Activated CD8-positive, alpha-beta T cell treated with anti-CD3 and anti-CD28 coated beads for 36 hours (primary cell): ENCODE measurements at regions of chr19 and their contacts with region 1.

Region 1: GRCh38 chr19:2084993-2085720 is 11.0 kb downstream of the MOB3A start:
- DNase-seq: peak; percentile 98
- ATAC-seq: peak; percentile 60
- H3K4me3 Mint-ChIP-seq: peak overlapping the region; percentile 99
- H3K27ac Mint-ChIP-seq: peak overlapping the region; percentile 100
- H3K4me1 Mint-ChIP-seq: peaks cover 56% of the 10 kb centered on the region
- H3K27me3 Mint-ChIP-seq: no peaks in the 10 kb centered on the region
- CTCF ChIP-seq: no peak

Region 2: GRCh38 chr19:2021453-2022140 is 63.6 kb before region 1 on chr19:
- CTCF ChIA-PET with region 1: no interaction called
- POLR2A ChIA-PET with region 1: interaction called, 3 read pairs
- intact Hi-C with region 1: loop called (anchors 5 kb)
- DNase-seq: no peak
- ATAC-seq: no peak
- H3K4me3 Mint-ChIP-seq: no peak overlapping the region
- H3K27ac Mint-ChIP-seq: no peak overlapping the region
- H3K4me1 Mint-ChIP-seq: peaks cover 4% of the 10 kb centered on the region
- H3K27me3 Mint-ChIP-seq: no peaks in the 10 kb centered on the region
- CTCF ChIP-seq: no peak

Region 3: DNA sequence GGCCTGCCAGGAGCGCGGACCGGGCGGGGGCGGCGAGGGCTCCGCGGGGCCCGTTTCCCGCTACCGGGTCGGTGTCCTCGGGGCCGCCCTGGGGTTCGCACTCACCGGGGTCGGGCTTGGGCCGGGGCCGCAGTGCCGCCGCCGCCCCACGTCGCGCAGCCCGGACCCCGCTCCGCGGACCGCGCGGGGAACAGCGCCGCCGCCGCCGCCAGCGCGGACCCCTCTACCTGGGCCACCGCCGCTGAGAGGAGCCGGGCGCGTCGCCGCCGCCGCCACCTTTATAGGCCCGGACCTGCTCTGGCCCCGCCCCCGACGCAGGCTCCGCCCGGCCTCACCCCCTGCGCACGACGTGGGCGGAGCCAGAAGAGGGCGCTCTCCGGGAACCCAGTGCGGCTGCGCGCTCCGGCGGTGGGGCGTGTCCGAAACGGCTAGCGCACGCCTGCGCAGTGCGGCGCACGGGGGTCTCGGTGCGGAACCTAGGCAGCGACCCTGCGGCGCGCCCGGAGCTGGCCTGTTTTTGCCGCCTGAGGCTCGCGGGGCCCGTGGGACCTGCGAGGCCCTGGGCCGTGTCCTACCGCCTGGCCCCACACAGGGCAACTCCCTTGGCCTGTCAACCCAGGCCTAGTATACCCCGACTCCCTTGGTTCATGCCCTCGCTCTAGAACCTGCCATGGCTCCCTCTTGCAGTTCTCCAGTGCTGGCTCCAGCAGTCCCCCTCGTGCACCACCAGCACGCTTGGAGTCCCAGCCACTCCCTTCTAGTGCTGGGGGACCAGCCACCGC is 34.0 kb before region 1 on chr19 and contains the start of gene MKNK2:
- CTCF ChIA-PET with region 1: no interaction called
- POLR2A ChIA-PET with region 1: interaction called, 29 read pairs
- intact Hi-C with region 1: loop called (anchors 5 kb)
- DNase-seq: peak; percentile 95
- ATAC-seq: peak; percentile 75
- H3K4me3 Mint-ChIP-seq: peak within 1 kb of the TSS; percentile 83
- H3K27ac Mint-ChIP-seq: peak within 1 kb of the TSS; percentile 96
- H3K4me1 Mint-ChIP-seq: peaks cover 52% of the 10 kb centered on the region
- H3K27me3 Mint-ChIP-seq: no peaks in the 10 kb centered on the region
- CTCF ChIP-seq: peak; percentile 49
- total RNA-seq, gene MKNK2: 323 to 327 TPM

Region 4: DNA sequence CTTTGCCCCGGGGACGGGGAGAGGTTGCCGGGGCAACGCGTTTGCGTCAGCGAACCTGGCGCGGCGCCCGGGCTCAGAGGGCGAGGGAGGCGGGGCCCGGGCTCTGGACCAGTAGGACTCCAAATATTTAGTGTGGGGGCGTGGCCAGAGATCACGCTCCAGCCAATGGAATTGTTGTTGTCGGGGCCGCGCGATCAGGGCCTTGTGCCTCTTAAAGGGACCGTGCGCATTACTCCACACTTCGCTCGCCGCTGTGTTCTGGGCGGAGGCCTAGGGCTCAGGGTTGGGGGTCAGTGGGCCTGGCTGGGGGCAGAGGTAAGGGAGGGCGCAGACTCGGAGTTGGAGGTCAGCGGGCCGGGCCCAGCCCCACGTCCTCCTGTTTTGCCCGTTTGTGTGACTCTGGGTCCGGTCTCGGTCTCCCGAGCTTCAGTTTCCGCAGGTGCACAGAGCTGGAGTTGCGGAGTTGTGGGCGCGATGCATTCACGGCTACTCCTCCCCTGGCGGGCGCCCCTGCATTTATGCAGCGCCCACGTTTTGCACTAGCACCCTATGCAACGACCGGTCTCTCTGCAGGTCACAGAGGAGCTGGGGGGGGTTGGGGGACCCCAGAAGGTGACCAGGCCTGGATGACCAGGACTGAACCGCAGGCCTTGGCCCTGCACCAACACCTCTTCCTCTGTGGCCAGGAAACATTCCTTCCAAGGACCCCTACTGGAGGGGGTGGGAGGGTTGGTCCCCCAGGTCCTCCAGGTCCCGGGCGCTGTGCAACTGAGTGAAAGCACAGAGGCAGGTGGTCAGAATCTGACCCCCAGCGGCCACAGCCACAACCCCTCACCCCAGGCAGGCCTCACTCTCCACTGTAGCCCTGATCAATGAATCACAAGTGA is 23.4 kb before region 1 on chr19:
- CTCF ChIA-PET with region 1: no interaction called
- POLR2A ChIA-PET with region 1: interaction called, 29 read pairs
- intact Hi-C with region 1: no loop called
- DNase-seq: peak; percentile 100
- ATAC-seq: peak; percentile 94
- H3K4me3 Mint-ChIP-seq: peak overlapping the region; percentile 85
- H3K27ac Mint-ChIP-seq: peak overlapping the region; percentile 91
- H3K4me1 Mint-ChIP-seq: peaks cover 40% of the 10 kb centered on the region
- H3K27me3 Mint-ChIP-seq: no peaks in the 10 kb centered on the region
- CTCF ChIP-seq: no peak

Region 5: DNA sequence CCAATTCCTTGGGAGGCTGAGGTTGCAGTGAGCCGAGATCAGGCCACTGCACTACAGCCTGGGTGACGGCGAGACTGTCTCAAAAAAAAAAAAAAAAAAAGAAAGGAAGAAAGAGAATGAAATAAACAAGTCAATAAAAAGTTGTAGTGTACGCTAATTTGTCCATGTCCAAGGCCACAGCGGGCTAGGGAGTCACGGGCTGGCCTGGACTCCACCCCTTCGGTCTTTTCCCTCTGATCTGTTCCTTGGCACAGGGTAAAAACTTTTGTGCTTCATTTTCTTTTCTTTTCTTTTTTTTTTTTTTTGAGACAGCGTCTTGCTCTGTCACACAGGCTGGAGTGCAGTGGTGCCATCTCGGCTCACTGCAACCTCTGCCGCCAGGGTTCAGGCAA is 14.7 kb before region 1 on chr19:
- CTCF ChIA-PET with region 1: interaction called, 13 read pairs
- POLR2A ChIA-PET with region 1: interaction called, 7 read pairs
- intact Hi-C with region 1: no loop called
- DNase-seq: no peak
- ATAC-seq: no peak
- H3K4me3 Mint-ChIP-seq: no peak overlapping the region
- H3K27ac Mint-ChIP-seq: no peak overlapping the region
- H3K4me1 Mint-ChIP-seq: peaks cover 8% of the 10 kb centered on the region
- H3K27me3 Mint-ChIP-seq: no peaks in the 10 kb centered on the region
- CTCF ChIP-seq: no peak

Region 6: GRCh38 chr19:2096480-2097329 is 11.5 kb after region 1 on chr19 and contains the start of gene IZUMO4:
- CTCF ChIA-PET with region 1: interaction called, 13 read pairs
- POLR2A ChIA-PET with region 1: interaction called, 43 read pairs
- intact Hi-C with region 1: no loop called
- DNase-seq: peak; percentile 100
- ATAC-seq: peak; percentile 86
- H3K4me3 Mint-ChIP-seq: peak within 1 kb of the TSS; percentile 85
- H3K27ac Mint-ChIP-seq: peak within 1 kb of the TSS; percentile 84
- H3K4me1 Mint-ChIP-seq: peaks cover 26% of the 10 kb centered on the region
- H3K27me3 Mint-ChIP-seq: no peaks in the 10 kb centered on the region
- CTCF ChIP-seq: no peak
- total RNA-seq, gene IZUMO4: 22.6 to 23.0 TPM

Region 7: GRCh38 chr19:2145831-2146241 is 60.7 kb after region 1 on chr19:
- CTCF ChIA-PET with region 1: no interaction called
- POLR2A ChIA-PET with region 1: no interaction called
- intact Hi-C with region 1: no loop called
- DNase-seq: peak; percentile 61
- ATAC-seq: peak; percentile 48
- H3K4me3 Mint-ChIP-seq: no peak overlapping the region
- H3K27ac Mint-ChIP-seq: peak overlapping the region; percentile 15
- H3K4me1 Mint-ChIP-seq: peaks cover 43% of the 10 kb centered on the region
- H3K27me3 Mint-ChIP-seq: no peaks in the 10 kb centered on the region
- CTCF ChIP-seq: no peak